HEK293 (cell line): ENCODE measurements at regions of chr6 and their contacts with region 1.

Region 1: DNA sequence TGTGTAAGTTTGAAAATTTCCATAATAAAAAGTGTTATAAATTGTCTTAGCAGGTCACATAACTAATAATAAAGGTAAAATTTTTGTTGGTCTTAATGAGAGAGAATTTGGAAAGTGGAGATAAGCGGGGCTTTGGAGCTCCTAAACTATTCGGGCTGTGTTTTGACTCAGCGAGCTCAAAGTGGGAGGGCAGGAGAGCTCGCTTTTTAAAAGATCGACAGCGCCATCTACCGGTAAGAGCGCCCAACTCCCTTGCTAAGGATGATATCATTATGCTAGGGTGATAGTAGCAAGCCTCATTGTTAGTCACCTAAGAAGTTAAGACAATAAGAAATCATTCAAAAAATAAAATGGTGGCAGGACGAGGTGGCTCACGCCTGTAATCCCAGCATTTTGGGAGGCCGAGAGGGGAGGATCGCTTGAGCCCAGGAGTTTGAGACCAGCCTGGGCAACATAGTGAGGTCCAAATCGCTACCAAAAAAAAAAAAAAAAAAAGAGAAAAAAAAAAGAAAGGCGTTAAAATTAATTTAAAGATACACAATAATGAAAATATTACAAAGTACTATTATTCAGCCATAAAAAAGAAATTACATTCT is 24.8 kb downstream of the C6orf15 start:
- H3K4me3 ChIP-seq: no peak overlapping the region
- H3K27ac ChIP-seq: no peak overlapping the region
- H3K4me1 ChIP-seq: peaks cover 10% of the 10 kb centered on the region; the same call in 1 of the 2 replicates
- CTCF ChIP-seq: peak; percentile 56

Region 2: DNA sequence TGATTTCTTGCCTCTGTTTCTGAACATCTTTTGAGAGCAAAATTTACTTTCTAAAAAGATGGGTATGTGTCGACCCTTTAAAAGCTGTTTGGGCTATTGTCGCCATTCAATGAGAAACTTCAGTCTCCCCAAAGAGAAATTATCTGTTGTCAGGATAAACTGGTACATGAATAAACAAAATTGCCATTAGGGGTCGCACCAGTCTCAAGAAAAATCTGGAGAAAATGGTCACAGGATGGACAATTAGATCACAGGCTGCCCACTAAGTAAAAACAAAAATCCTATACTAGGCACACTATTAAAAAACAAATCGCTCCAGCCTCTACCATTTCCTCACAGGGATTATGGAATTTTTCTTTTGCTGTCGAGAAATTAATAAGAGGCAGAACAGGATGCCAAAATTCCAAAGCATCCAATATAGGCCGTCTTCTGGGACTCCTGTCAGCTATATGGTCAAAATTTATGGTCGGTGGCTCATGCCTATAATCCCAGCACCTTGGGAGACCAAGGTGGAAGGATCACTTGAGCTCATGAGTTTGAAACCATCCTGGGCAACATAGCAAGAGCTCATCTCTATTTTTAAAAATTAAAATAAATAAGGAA is 603.8 kb before region 1 on chr6:
- CTCF ChIA-PET with region 1: interaction called, 23 read pairs
- POLR2A ChIA-PET with region 1: no interaction called
- H3K4me3 ChIP-seq: no peak overlapping the region
- H3K27ac ChIP-seq: no peak overlapping the region
- H3K4me1 ChIP-seq: no peaks in the 10 kb centered on the region
- CTCF ChIP-seq: peak; percentile 33; the same call in 1 of the 2 replicates

Region 3: DNA sequence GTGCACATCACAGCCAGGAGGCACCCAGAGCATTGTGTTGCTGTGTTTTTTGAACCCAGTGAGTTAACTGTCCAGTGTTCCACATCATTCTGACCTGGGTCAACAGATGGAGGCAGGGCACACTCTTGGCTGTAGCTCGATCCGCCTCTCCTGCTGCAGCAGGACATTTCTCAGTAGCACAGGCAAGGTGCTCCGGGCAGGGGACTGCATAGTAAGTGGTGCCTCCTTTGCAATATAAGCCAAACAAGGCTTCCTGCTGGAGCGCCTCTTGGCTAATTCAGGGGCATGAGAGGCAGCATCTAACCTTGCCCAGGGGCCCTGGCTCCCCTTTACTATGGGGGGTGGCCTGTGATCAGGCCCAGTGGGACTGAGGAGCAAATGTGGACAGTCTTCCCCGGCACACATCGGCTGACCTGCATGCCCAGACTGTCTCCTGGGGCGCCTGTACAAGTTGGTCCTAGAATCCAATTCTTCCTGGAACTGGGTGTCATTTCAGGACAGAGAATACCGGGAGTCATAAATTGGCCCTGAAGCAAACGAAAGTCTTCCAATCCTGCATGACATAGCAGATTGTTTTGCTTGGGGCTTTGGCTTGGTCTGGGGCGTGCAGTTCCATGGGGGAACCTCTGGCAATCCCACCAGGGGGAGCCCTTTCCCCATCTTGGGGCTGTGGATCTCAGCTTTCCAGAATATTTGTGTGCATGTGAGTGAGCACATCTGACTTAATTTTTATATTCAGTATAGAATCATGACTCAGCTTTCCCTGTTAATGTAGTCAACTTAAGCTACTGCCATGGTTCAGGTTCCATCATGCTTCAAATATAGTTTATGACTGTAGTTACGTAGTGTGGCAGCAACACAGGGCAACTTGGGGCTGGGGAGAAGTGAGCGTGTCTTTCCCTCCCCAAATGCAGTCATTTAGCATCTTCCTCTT is 259.3 kb before region 1 on chr6:
- CTCF ChIA-PET with region 1: interaction called, 111 read pairs
- POLR2A ChIA-PET with region 1: no interaction called
- H3K4me3 ChIP-seq: no peak overlapping the region
- H3K27ac ChIP-seq: no peak overlapping the region
- H3K4me1 ChIP-seq: no peaks in the 10 kb centered on the region
- CTCF ChIP-seq: peak; percentile 79

Region 4: DNA sequence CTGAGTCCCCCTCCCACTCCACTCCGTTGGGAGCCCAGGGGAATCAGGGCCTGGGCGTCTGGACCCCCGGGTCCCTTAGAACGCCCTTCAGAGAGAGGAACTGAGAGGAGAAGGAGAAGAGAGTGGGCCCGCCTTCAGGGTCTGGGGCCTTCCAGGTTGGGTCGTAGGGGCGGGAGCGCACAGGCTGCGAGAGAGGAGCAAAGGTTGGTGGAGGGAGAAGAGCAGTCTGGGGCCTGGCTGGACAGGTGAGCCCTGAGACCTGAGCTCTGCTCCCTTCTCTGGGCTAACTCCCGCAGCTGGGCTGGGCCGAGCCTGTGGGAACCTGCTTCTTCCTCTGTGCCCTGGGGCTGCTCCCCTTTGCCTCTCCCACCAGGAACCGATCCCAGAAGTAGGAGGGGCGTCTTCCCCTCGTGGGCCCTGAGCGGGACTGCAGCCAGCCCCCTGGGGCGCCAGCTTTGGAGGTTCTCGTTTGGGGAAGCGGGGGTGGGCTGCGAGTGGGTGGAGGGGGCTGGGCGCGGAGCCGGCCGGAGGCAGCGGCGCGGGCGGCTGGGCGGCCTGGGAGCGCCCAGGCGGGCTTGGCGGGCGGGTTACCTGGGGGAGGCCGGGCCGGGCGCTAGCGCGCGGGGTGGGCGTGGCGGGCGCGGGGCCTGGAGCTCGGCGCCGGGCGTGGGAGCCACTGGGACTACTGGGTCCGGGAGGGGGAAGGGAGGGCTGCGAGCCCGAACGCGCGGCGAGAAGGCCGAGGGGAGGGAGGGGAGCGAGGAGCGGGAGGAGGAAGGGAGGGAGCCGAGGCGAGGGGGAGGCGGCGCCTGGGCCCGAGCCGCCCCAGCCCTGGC is 203.7 kb before region 1 on chr6 and contains the start of gene DDR1:
- CTCF ChIA-PET with region 1: interaction called, 21 read pairs
- POLR2A ChIA-PET with region 1: interaction called, 6 read pairs
- H3K4me3 ChIP-seq: peak within 1 kb of the TSS; percentile 47
- H3K27ac ChIP-seq: peak within 1 kb of the TSS; percentile 69
- H3K4me1 ChIP-seq: peaks cover 35% of the 10 kb centered on the region
- CTCF ChIP-seq: no peak

Region 5: GRCh38 chr6:30942338-30943060 is 145.1 kb before region 1 on chr6:
- CTCF ChIA-PET with region 1: interaction called, 11 read pairs
- POLR2A ChIA-PET with region 1: no interaction called
- H3K4me3 ChIP-seq: no peak overlapping the region
- H3K27ac ChIP-seq: no peak overlapping the region
- H3K4me1 ChIP-seq: no peaks in the 10 kb centered on the region; the same call in 1 of the 2 replicates
- CTCF ChIP-seq: peak; percentile 63; the same call in 1 of the 2 replicates

Region 6: GRCh38 chr6:31114970-31115849 is 27.6 kb after region 1 on chr6:
- CTCF ChIA-PET with region 1: interaction called, 18 read pairs
- POLR2A ChIA-PET with region 1: interaction called, 5 read pairs
- H3K4me3 ChIP-seq: no peak overlapping the region
- H3K27ac ChIP-seq: no peak overlapping the region
- H3K4me1 ChIP-seq: peaks cover 7% of the 10 kb centered on the region
- CTCF ChIP-seq: peak; percentile 42; the same call in 1 of the 2 replicates